ENCODE measurements at regions of chr15 and their contacts with region 1.

Region 1: GRCh38 chr15:35751413-35752133 is 205.6 kb upstream of the DPH6 start:
- DNase-seq: peak; percentile 73
- ATAC-seq: no peak
- H3K4me3 Mint-ChIP-seq: no peak overlapping the region
- H3K27ac Mint-ChIP-seq: no peak overlapping the region
- H3K4me1 Mint-ChIP-seq: no peaks in the 10 kb centered on the region
- H3K27me3 Mint-ChIP-seq: no peaks in the 10 kb centered on the region
- CTCF ChIP-seq: peak; percentile 76

Region 2: GRCh38 chr15:35717721-35718120 is 33.9 kb before region 1 on chr15:
- CTCF ChIA-PET with region 1: no interaction called
- POLR2A ChIA-PET with region 1: no interaction called
- intact Hi-C with region 1: no loop called
- DNase-seq: no peak
- ATAC-seq: no peak
- H3K4me3 Mint-ChIP-seq: no peak overlapping the region
- H3K27ac Mint-ChIP-seq: no peak overlapping the region
- H3K4me1 Mint-ChIP-seq: no peaks in the 10 kb centered on the region
- H3K27me3 Mint-ChIP-seq: peaks cover 2% of the 10 kb centered on the region
- CTCF ChIP-seq: no peak

Region 3: DNA sequence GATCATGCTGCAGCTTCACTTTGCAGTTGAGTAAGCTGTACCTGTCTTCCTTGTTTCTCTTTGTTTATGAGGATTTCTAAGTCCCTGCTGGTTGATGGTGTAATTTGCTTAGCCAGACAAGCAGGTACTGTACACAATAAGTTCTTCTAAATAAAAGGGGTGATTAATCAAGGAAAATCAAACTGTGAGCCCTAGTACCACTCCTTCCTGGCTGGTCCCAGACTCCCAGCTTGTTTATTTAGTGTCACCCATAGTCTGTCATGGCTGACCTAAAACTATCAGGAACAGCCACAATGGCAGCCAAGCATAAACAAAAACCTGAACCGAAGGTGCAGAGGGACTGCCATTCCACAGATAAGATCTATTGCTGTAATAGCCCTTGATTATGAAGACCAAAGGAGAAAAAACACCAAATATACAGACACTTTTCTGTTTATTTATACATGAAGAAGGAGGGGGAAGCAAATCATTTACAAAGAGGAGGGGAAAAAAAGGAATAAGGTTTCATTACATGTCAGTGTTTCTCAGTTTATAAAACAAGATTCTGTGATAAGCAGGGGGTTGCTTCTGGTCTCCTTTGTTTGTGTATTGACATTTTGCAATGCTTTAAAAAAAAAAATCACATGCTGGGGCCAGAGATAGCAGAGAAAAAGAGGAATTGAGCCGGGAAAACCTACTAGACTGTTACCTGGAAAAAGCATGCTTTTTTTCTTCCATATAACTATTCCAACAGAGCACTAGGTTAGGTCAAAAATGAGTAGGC is 23.2 kb before region 1 on chr15:
- CTCF ChIA-PET with region 1: interaction called, 10 read pairs
- POLR2A ChIA-PET with region 1: no interaction called
- intact Hi-C with region 1: no loop called
- DNase-seq: no peak
- ATAC-seq: no peak
- H3K4me3 Mint-ChIP-seq: no peak overlapping the region
- H3K27ac Mint-ChIP-seq: no peak overlapping the region
- H3K4me1 Mint-ChIP-seq: no peaks in the 10 kb centered on the region
- H3K27me3 Mint-ChIP-seq: peaks cover 2% of the 10 kb centered on the region
- CTCF ChIP-seq: no peak

Region 4: DNA sequence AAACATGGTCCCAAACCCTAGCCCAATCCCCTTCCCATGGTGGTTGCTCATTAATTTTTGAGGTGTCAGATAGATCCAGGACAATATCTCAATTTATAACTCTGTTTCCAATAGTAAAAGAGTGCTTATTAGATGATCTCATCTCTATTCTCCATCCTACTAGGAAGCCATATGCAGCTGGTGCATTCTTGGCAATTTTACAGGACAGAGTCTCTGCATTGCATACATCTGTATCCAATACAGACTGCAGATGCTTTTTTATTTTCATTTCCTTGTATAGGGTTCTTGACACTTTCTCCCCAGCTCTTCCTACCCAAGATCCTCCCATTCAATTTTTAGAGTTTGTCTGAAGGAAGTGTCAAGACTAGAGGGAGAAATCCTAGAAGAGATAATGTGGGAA is 10.8 kb before region 1 on chr15:
- CTCF ChIA-PET with region 1: interaction called, 13 read pairs
- POLR2A ChIA-PET with region 1: no interaction called
- intact Hi-C with region 1: no loop called
- DNase-seq: no peak
- ATAC-seq: no peak
- H3K4me3 Mint-ChIP-seq: no peak overlapping the region
- H3K27ac Mint-ChIP-seq: no peak overlapping the region
- H3K4me1 Mint-ChIP-seq: no peaks in the 10 kb centered on the region
- H3K27me3 Mint-ChIP-seq: peaks cover 12% of the 10 kb centered on the region
- CTCF ChIP-seq: no peak

Region 5: GRCh38 chr15:35764661-35765519 is 13.3 kb after region 1 on chr15:
- CTCF ChIA-PET with region 1: interaction called, 23 read pairs
- POLR2A ChIA-PET with region 1: no interaction called
- intact Hi-C with region 1: no loop called
- DNase-seq: no peak
- ATAC-seq: no peak
- H3K4me3 Mint-ChIP-seq: no peak overlapping the region
- H3K27ac Mint-ChIP-seq: no peak overlapping the region
- H3K4me1 Mint-ChIP-seq: no peaks in the 10 kb centered on the region
- H3K27me3 Mint-ChIP-seq: peaks cover 4% of the 10 kb centered on the region
- CTCF ChIP-seq: no peak

Measured in activated CD8-positive, alpha-beta T cell treated with anti-CD3 and anti-CD28 coated beads for 36 hours (primary cell).